ENCODE measurements at regions of chr2 and their contacts with region 1.

Region 1: DNA sequence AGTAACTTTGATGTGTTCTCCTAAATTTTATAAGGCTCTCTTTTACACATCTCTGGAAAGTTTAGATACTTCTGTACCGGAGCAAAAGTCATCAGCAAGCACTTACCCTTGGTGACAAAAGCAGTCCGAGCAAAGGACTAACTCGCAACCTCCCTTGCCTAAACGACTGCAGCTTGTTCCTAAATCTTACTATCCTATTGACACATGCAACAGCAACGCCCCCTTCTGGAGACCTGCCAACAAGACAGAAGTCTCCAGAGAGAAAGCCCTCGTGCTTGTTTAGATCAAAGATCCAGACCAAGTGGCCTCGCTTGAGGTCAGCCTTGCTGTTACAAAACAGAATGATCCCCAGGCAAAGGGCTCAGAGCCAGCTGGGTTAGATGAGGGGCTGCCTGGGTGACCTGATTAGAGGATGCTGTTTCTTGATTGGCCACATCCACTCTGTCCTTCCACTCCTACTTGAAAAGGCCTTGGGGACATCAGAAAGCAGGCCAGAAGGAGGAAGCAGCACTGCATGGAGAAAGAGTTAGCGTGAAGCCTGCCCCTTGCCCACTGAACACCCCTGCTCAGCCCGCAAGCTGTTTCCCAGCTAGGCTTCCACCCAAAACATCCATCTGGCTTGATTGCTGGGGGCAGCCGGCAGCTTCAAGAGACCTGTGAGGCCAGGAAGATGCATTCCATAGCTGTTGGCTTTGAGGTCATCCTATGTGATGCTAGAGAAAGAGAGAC is 94.3 kb downstream of the HNRNPLL start:
- DNase-seq: peak; percentile 81

Region 2: GRCh38 chr2:38315707-38316333 is 192.7 kb before region 1 on chr2:
- CTCF ChIA-PET with region 1: interaction called, 28 read pairs
- POLR2A ChIA-PET with region 1: no interaction called
- DNase-seq: peak; percentile 27

Region 3: GRCh38 chr2:38343212-38343611 is 165.3 kb before region 1 on chr2:
- CTCF ChIA-PET with region 1: interaction called, 10 read pairs
- POLR2A ChIA-PET with region 1: no interaction called
- DNase-seq: no peak

Region 4: DNA sequence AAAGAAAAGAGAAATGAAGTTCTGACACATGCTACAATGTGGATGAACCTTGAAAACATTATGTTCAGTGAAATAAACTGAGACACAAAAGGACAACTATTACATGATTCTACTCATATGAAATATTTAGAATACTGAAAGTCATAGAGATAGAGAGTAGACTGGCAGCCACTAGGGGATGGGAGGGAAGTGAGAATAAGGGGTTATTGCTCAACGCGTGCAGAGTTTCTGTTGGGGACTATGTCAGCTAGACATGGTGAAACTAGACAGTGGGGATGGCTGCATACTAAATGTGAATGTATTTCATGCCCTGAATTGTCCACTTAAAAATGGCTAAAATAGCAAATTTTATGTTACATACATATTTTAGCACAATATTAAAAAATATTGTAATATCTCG is 22.7 kb before region 1 on chr2:
- CTCF ChIA-PET with region 1: no interaction called
- POLR2A ChIA-PET with region 1: no interaction called
- DNase-seq: no peak

Measured in HEK293T (cell line).